ENCODE measurements at regions of chr12 and their contacts with region 1.

Region 1: GRCh38 chr12:111819191-111820150 is 22.6 kb upstream of the MAPKAPK5 start:
- DNase-seq: no peak
- H3K4me3 ChIP-seq: no peak overlapping the region
- H3K27ac ChIP-seq: no peak overlapping the region
- H3K4me1 ChIP-seq: no peaks in the 10 kb centered on the region
- H3K27me3 ChIP-seq: peaks cover 53% of the 10 kb centered on the region

Region 2: DNA sequence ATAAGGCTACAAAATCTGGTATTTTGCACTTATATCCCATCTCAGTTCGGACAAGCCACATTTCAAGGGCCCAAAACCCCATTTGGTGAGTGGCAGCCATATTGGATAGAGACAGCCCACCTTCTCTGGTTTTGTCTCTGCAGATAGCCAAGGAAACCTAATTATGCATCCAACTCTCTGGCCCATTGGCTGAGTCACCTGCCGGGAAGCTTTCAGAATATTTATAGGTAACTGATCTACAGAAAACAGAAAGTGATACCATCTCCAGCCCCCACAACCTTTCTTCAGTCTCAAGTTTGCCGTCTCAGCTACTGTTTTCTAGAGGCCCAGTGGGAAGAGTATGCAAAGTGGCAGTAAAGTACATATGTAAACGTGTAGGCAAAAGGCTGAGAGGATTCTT is 1043.1 kb before region 1 on chr12:
- in situ Hi-C with region 1: no loop called
- DNase-seq: no peak
- H3K4me3 ChIP-seq: no peak overlapping the region
- H3K27ac ChIP-seq: no peak overlapping the region
- H3K4me1 ChIP-seq: no peaks in the 10 kb centered on the region
- H3K27me3 ChIP-seq: no peaks in the 10 kb centered on the region

Region 3: GRCh38 chr12:111757361-111758119 is 61.9 kb before region 1 on chr12:
- in situ Hi-C with region 1: loop called (anchors 5 kb)
- DNase-seq: no peak
- H3K4me3 ChIP-seq: no peak overlapping the region
- H3K27ac ChIP-seq: no peak overlapping the region
- H3K4me1 ChIP-seq: no peaks in the 10 kb centered on the region
- H3K27me3 ChIP-seq: no peaks in the 10 kb centered on the region

Region 4: DNA sequence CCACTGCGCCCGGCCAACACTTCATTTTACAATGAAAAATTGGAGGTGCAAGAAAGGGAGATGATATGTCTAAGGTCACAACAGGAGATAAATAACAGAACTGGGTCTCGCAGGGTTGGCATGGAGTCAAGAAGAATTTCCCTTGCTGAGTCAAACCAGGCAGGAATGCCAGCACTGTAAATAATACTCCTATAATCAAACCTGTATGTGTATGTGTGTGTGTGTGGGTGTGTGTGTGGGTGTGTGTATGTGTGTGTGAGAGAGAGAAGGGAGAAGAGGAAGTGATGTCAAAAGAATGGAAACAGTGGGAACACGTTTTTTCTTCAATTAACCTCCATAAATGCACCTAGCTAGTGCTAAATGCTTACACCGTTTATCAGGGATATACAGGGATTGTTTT is 123.1 kb after region 1 on chr12:
- in situ Hi-C with region 1: no loop called
- DNase-seq: peak; percentile 44
- H3K4me3 ChIP-seq: no peak overlapping the region
- H3K27ac ChIP-seq: no peak overlapping the region
- H3K4me1 ChIP-seq: peaks cover 6% of the 10 kb centered on the region; the same call in 1 of the 2 replicates
- H3K27me3 ChIP-seq: no peaks in the 10 kb centered on the region

Region 5: GRCh38 chr12:112198120-112198733 is 378.8 kb after region 1 on chr12:
- in situ Hi-C with region 1: no loop called
- DNase-seq: peak; percentile 70
- H3K4me3 ChIP-seq: no peak overlapping the region
- H3K27ac ChIP-seq: no peak overlapping the region
- H3K4me1 ChIP-seq: no peaks in the 10 kb centered on the region
- H3K27me3 ChIP-seq: no peaks in the 10 kb centered on the region

Measured in GM23248 (cell line).